ENCODE measurements at regions of chr11 and their contacts with region 1.

Region 1: GRCh38 chr11:18731949-18732821 is 6.2 kb upstream of the IGSF22 start:
- DNase-seq: peak; percentile 54 to 66 (median 60)
- H3K4me3 ChIP-seq: no peak overlapping the region
- H3K4me3 Mint-ChIP-seq: no peak overlapping the region
- H3K27ac ChIP-seq: no peak overlapping the region
- H3K27ac Mint-ChIP-seq: peak overlapping the region in 4 of 7 donors; percentile 4 to 76 (median 50)
- H3K4me1 ChIP-seq: peaks cover 6% of the 10 kb centered on the region
- H3K4me1 Mint-ChIP-seq: peaks cover 4 to 15% (median 11%) of the 10 kb centered on the region in 4 donors
- H3K27me3 ChIP-seq: no peaks in the 10 kb centered on the region
- H3K27me3 Mint-ChIP-seq: no peaks in the 10 kb centered on the region

Region 2: DNA sequence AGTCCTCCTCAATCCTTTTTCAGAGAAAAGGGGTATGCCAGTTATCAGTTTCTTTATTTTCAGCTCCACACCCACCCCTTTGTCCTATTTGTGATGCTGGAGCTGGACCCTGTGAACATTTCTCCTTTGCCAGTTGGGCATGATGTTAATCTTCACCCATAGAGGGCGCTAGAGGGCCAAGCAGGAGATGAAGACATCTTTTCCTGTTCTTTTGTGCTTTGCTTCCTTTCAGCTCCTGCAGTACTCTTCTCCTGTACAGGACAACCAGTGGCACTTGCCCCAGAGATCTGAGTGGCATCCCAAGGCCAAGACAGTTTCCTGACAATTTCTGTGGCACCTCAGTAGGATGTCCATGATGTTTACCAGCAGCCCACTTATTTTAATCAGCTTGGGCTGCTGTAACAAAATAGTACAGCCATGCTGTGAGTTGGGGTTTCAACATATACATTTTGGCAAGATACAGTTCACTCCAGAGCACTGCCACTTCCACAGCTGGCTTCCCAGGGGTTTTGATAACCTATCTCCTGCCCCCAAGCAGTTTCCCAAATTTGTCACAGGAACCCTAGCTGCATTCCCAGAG is 488.3 kb before region 1 on chr11:
- CTCF ChIA-PET with region 1: interaction called, 9 read pairs
- POLR2A ChIA-PET with region 1: no interaction called
- intact Hi-C with region 1: loop called (anchors 1 kb)
- DNase-seq: peak; percentile 71 to 79 (median 73)
- H3K4me3 ChIP-seq: no peak overlapping the region
- H3K4me3 Mint-ChIP-seq: peak overlapping the region in 1 of 8 donors; percentile 46
- H3K27ac ChIP-seq: no peak overlapping the region
- H3K27ac Mint-ChIP-seq: peak overlapping the region in 6 of 7 donors; percentile 2 to 48 (median 24)
- H3K4me1 ChIP-seq: peaks cover 8% of the 10 kb centered on the region
- H3K4me1 Mint-ChIP-seq: peaks cover 10 to 27% (median 18%) of the 10 kb centered on the region in 4 donors
- H3K27me3 ChIP-seq: peaks cover 3% of the 10 kb centered on the region
- H3K27me3 Mint-ChIP-seq: peaks cover 8 to 9% of the 10 kb centered on the region in 2 donors

Region 3: DNA sequence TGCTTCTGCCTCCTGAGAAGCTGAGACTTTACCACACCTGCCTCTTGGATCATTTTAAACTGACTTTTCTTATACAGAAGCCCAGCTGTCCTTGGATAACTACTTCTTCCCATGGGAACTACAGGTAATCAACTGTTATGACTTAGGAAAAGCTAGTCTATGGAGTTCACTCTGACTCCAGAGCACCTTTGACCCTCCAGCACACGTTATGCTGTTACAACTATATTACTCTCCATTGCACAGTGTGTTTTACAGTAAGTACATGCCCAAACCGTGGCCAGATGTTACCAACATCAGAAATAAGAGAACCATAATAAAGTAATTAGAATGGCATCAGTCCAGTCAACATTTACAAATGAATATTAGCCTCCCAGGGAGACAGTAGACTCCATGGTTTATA is 184.2 kb before region 1 on chr11:
- CTCF ChIA-PET with region 1: interaction called, 12 read pairs
- POLR2A ChIA-PET with region 1: no interaction called
- intact Hi-C with region 1: no loop called
- DNase-seq: no peak
- H3K4me3 ChIP-seq: no peak overlapping the region
- H3K4me3 Mint-ChIP-seq: no peak overlapping the region
- H3K27ac ChIP-seq: no peak overlapping the region
- H3K27ac Mint-ChIP-seq: no peak overlapping the region
- H3K4me1 ChIP-seq: no peaks in the 10 kb centered on the region
- H3K4me1 Mint-ChIP-seq: no peaks in the 10 kb centered on the region
- H3K27me3 ChIP-seq: no peaks in the 10 kb centered on the region
- H3K27me3 Mint-ChIP-seq: no peaks in the 10 kb centered on the region

Region 4: GRCh38 chr11:18669220-18669598 is 63.0 kb before region 1 on chr11:
- CTCF ChIA-PET with region 1: interaction called, 12 read pairs
- POLR2A ChIA-PET with region 1: interaction called, 3 read pairs
- intact Hi-C with region 1: loop called (anchors 1 kb)
- DNase-seq: peak in 2 of 5 donors; percentile 13 to 63
- H3K4me3 ChIP-seq: no peak overlapping the region
- H3K4me3 Mint-ChIP-seq: peak overlapping the region in 7 of 8 donors; percentile 20 to 69 (median 63)
- H3K27ac ChIP-seq: no peak overlapping the region
- H3K27ac Mint-ChIP-seq: peak overlapping the region; percentile 3 to 91 (median 70)
- H3K4me1 ChIP-seq: peaks cover 47% of the 10 kb centered on the region
- H3K4me1 Mint-ChIP-seq: peaks cover 27 to 76% (median 52%) of the 10 kb centered on the region in 4 donors
- H3K27me3 ChIP-seq: no peaks in the 10 kb centered on the region
- H3K27me3 Mint-ChIP-seq: no peaks in the 10 kb centered on the region

Region 5: GRCh38 chr11:18713646-18714442 is 18.3 kb before region 1 on chr11:
- CTCF ChIA-PET with region 1: interaction called, 17 read pairs
- POLR2A ChIA-PET with region 1: no interaction called
- intact Hi-C with region 1: no loop called
- DNase-seq: no peak
- H3K4me3 ChIP-seq: no peak overlapping the region
- H3K4me3 Mint-ChIP-seq: no peak overlapping the region
- H3K27ac ChIP-seq: no peak overlapping the region
- H3K27ac Mint-ChIP-seq: no peak overlapping the region
- H3K4me1 ChIP-seq: no peaks in the 10 kb centered on the region
- H3K4me1 Mint-ChIP-seq: peaks cover 0 to 1% (median 0%) of the 10 kb centered on the region in 4 donors
- H3K27me3 ChIP-seq: no peaks in the 10 kb centered on the region
- H3K27me3 Mint-ChIP-seq: no peaks in the 10 kb centered on the region

Region 6: GRCh38 chr11:18958221-18958910 is 226.2 kb after region 1 on chr11:
- CTCF ChIA-PET with region 1: no interaction called
- POLR2A ChIA-PET with region 1: no interaction called
- intact Hi-C with region 1: no loop called
- DNase-seq: no peak
- H3K4me3 ChIP-seq: no peak overlapping the region
- H3K4me3 Mint-ChIP-seq: no peak overlapping the region
- H3K27ac ChIP-seq: no peak overlapping the region
- H3K27ac Mint-ChIP-seq: no peak overlapping the region
- H3K4me1 ChIP-seq: no peaks in the 10 kb centered on the region
- H3K4me1 Mint-ChIP-seq: no peaks in the 10 kb centered on the region
- H3K27me3 ChIP-seq: no peaks in the 10 kb centered on the region
- H3K27me3 Mint-ChIP-seq: peaks cover 3 to 20% of the 10 kb centered on the region in 2 donors